GM13976 (cell line): ENCODE measurements at regions of chr6 and their contacts with region 1.

Region 1: DNA sequence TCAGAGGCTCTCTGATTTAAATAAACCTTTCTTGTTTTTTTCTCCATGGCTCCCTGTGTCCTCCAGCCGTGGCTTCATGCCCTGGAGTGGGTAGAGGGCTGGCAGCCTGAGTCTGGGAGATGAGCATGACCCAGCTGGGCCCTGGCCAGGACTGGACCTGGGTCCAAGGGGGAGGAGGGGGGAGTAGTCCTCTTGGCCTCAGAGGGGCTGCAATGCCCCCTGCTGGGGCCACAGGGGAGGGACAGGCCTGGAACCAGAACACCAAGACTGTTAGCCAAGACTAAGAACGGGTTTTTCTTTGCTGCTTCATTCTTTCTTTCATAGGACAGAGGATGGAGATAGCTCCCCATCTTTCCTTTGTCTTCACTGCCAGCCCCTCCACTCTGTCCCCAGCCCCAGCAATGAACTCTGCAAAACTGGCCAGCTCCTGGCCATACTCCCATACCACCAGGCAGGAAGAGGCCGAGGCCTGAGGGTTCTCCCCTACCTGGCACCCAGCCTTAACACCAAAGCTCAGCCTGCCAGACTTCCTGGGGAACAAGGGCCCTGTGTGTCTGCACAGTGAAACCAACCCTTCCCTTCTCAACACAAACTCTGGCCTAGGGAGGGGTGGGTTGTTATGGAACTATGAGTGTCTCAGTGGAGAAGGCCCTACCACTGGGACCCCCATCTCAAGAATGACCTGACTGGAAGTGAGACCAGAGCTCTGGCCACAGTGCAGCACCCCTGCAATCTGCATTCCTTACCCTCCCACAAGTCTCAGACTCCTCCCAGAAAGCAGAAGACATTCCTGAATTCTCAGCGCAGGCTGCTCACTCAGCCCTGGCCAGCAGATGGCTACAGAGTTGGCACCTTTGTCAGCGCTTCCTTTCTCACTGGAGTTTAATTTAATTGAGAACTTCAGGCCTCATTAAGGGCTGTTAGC is 11.0 kb downstream of the SLC29A1 start:
- DNase-seq: peak; percentile 71
- CTCF ChIP-seq: peak; percentile 56

Region 2: DNA sequence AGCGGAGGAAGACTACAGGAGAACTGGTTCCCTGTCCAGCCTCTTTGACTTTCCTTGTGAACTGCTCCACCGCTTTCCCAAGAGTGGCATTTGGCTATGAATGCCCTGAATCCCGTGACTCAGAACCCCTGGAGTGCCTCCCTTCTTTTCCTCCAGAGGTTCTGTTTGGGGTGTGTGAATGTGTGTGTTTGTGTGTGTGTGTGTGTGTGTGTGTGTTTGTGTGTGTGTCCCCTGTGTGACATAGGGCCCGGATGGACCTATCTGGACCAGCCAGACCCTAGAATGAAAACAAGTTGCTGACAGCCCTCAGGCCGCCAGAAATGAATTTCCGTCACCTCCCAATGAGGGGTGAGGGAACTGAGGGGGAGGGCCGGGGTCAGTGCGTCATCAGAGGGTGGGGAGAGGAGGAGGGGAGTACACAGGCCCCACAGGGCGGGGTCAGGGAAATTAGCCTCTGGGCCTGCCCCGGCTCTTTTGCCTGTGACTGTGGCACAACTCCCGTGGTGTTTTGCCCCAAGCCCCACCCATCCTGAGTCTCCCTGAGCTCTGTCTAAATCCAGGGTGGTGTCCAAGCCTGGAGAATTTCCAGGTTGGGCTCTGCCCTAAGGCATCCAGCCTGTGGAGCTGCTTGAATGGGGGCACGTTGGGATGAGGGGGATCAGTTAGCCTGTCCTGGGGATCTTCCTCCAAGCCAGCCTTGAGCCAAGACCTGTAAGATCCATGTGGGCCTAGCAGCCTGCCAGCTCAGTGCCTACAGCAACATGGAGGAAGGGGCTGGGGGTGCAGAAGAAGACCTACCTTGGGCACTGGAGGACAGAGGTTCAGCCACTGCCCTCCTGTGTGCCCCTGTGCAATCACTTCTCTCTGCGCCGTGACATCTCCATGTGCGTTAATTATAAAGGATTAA is 531.6 kb before region 1 on chr6:
- in situ Hi-C with region 1: no loop called
- DNase-seq: no peak
- CTCF ChIP-seq: no peak

Region 3: GRCh38 chr6:44172731-44173500 is 61.4 kb before region 1 on chr6:
- in situ Hi-C with region 1: loop called (anchors 5 kb)
- DNase-seq: peak; percentile 90
- CTCF ChIP-seq: peak; percentile 89

Region 4: DNA sequence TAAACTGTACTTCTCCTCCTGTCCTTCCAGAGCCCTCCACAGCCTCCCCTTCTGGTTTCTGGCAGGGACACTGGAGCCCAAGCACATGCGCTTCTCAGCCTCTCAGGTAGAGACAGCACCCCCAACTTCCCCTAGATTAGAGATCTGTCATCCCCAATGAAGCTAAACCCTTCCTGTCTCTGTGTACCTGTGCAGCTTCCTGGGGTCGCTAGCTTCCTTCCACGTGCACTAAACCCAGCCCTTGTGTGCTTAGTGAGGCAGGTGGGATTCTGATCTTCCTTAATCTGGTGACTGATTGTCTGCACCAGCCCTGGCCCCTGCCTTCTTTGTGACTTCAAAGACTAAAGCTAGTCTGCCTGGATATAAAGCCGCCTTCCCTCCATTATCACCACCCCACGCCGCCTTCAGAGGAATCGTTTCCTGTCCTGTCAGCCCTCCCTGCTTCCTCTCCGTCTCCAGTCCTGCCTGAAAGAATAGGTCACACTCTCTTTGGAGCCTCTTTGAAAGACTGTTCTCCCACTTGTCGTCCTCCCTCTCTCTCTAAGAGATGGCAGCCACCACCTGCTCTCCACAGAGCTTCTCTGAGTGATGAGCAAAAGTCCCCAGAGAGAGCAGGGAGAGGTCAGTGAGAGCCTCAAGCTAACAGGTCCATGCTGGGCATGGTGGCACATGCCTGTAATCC is 48.3 kb before region 1 on chr6:
- in situ Hi-C with region 1: no loop called
- DNase-seq: peak; percentile 26
- CTCF ChIP-seq: no peak